Sciatic nerve (tissue), 2 donors: ENCODE measurements at regions of chr15 and their contacts with region 1.

Region 1: DNA sequence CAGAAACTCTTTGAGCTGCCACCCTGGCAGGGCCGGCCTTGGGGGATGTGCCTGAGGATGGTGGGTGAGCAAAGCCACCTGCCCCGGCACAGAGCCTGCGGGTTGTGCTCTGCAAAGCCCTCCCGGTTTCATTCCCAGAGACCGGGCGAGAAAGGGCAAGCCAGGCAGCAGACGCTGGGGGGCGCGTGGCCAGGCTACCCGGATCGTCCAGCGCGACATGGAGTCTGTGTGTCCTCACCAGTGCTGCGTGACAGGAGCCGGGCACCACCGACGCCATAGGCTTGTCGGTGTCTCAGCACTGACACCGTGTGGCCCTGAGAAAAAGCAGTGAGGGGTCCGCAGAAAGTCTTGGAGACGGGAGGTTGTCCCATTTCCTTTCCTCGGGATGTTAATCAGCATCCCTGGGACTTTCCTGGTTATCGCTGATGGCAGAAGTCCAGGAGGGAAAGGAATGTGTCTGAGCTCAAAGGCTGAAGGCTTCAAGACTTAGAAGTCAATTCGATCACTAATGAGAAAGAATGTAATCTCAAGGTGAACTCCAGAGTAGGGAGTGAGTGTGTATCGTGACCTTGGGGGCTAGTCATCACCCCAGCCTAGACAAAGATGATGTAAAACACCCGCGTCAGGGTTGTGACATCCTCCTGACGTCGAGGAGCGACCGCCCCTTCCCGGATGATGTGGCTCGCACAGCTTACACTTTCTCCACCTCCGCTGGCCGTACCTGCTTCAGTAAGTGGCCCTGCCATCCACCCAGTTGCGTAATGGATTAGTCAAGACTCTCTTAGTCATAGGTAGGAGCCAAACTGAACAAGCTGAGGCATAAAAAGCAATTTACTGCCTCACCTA is 36.3 kb upstream of the PLA2G4E start:
- DNase-seq: peak; percentile 74
- ATAC-seq: peak; percentile 89

Region 2: GRCh38 chr15:41881920-41882688 is 175.1 kb before region 1 on chr15:
- intact Hi-C with region 1: loop called (anchors 10 kb)
- DNase-seq: no peak
- ATAC-seq: peak; percentile 3